ENCODE measurements at regions of chr2 and their contacts with region 1.

Region 1: DNA sequence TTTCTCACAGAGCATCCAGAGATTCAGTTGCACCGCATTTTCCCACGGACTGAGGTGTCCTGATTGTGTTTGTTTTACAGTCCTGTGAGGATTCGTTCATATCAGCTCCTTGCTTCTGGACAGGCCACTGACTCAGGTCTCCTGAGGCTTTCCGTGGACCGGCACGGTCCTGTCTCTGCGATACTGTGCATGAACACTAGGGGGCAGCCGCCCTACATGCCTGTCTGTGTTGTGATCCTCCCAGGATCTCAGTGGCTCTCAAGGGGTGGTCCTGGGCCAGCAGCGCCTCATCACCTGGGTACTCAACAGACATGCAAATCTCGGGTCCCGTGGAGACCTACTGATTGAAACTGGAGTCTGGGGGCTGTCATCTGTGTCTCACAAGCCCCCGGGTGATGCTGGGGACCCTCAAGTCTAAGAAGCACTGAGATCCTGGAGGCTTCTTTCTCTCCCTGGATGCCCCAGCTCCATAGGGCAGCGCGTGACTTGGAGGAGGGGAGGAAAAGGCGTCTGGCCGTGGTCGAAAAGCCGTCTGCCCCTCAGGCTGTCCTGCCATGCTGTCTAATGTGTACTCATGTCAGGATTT is 28.9 kb downstream of the IL1R2 start:
- DNase-seq: peak; percentile 66
- H3K4me3 Mint-ChIP-seq: no peak overlapping the region
- H3K27ac Mint-ChIP-seq: no peak overlapping the region
- H3K4me1 Mint-ChIP-seq: peaks cover 12% of the 10 kb centered on the region
- H3K27me3 Mint-ChIP-seq: peaks cover 4% of the 10 kb centered on the region

Region 2: DNA sequence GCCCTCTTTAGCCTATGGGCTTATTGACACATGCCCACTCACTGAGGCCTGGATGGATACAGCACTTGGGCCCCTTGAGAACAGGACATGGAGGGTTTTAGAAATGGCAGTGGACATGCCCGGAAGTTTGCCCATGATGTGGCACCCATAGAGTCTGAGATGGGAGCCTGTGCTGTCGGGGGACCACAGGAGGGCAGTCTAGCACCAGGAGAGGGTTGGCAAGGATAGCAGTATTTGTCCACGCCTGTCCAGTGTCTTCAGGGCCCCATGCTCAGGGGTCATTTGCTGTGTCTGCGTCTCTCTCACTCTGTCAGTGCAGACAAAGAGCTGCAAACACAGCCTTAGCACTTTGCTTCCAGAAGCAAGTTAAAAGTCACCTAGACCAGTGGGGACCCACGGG is 214.8 kb after region 1 on chr2:
- intact Hi-C with region 1: loop called (anchors 1 kb)
- DNase-seq: no peak
- H3K4me3 Mint-ChIP-seq: no peak overlapping the region
- H3K27ac Mint-ChIP-seq: no peak overlapping the region
- H3K4me1 Mint-ChIP-seq: peaks cover 48% of the 10 kb centered on the region
- H3K27me3 Mint-ChIP-seq: peaks cover 2% of the 10 kb centered on the region

Region 3: GRCh38 chr2:102449370-102449974 is 428.8 kb after region 1 on chr2:
- intact Hi-C with region 1: loop called (anchors 1 kb)
- DNase-seq: peak; percentile 50
- H3K4me3 Mint-ChIP-seq: no peak overlapping the region
- H3K27ac Mint-ChIP-seq: no peak overlapping the region
- H3K4me1 Mint-ChIP-seq: peaks cover 8% of the 10 kb centered on the region
- H3K27me3 Mint-ChIP-seq: no peaks in the 10 kb centered on the region